Endothelial cell of umbilical vein (primary cell): ENCODE measurements at regions of chr7 and their contacts with region 1.

Region 1: GRCh38 chr7:5177060-5177459 is 13.0 kb upstream of the WIPI2 start:
- DNase-seq: peak; percentile 42
- H3K4me3 ChIP-seq: no peak overlapping the region
- H3K27ac ChIP-seq: no peak overlapping the region
- H3K4me1 ChIP-seq: no peaks in the 10 kb centered on the region
- H3K27me3 ChIP-seq: no peaks in the 10 kb centered on the region
- CTCF ChIP-seq: no peak
- POLR2A ChIP-seq: no peak

Region 2: GRCh38 chr7:4945949-4946348 is 231.1 kb before region 1 on chr7:
- CTCF ChIA-PET with region 1: no interaction called
- POLR2A ChIA-PET with region 1: no interaction called
- dilution Hi-C with region 1: no loop called
- intact Hi-C with region 1: no loop called
- DNase-seq: no peak
- H3K4me3 ChIP-seq: no peak overlapping the region
- H3K27ac ChIP-seq: no peak overlapping the region
- H3K4me1 ChIP-seq: no peaks in the 10 kb centered on the region
- H3K27me3 ChIP-seq: no peaks in the 10 kb centered on the region
- CTCF ChIP-seq: no peak
- POLR2A ChIP-seq: no peak

Region 3: GRCh38 chr7:5020097-5020496 is 157.0 kb before region 1 on chr7:
- CTCF ChIA-PET with region 1: no interaction called
- POLR2A ChIA-PET with region 1: no interaction called
- dilution Hi-C with region 1: no loop called
- intact Hi-C with region 1: no loop called
- DNase-seq: no peak
- H3K4me3 ChIP-seq: no peak overlapping the region
- H3K27ac ChIP-seq: no peak overlapping the region
- H3K4me1 ChIP-seq: no peaks in the 10 kb centered on the region
- H3K27me3 ChIP-seq: no peaks in the 10 kb centered on the region
- CTCF ChIP-seq: no peak
- POLR2A ChIP-seq: no peak

Region 4: DNA sequence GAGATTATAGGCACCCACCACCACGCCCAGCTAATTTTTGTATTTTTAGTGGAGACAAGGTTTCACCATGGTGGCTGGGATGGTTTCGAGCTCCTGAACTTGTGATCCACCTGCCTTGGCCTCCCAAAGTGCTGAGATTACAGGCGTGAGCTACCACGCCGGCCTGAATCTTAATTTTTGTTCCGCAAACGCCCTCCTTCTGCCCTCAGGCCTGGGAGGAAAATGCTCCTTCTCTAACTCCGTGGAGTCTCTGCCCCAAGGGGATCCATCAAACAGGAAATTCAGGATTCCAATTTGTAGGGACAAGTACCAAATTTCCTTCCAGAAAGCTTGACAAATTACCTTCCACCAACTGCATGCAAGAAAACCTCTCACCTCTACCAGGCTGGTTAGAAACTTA is 88.2 kb before region 1 on chr7:
- CTCF ChIA-PET with region 1: interaction called, 12 read pairs
- POLR2A ChIA-PET with region 1: interaction called, 4 read pairs
- dilution Hi-C with region 1: no loop called
- intact Hi-C with region 1: loop called (anchors 5 kb)
- DNase-seq: no peak
- H3K4me3 ChIP-seq: no peak overlapping the region
- H3K27ac ChIP-seq: no peak overlapping the region
- H3K4me1 ChIP-seq: no peaks in the 10 kb centered on the region
- H3K27me3 ChIP-seq: no peaks in the 10 kb centered on the region
- CTCF ChIP-seq: no peak
- POLR2A ChIP-seq: no peak

Region 5: DNA sequence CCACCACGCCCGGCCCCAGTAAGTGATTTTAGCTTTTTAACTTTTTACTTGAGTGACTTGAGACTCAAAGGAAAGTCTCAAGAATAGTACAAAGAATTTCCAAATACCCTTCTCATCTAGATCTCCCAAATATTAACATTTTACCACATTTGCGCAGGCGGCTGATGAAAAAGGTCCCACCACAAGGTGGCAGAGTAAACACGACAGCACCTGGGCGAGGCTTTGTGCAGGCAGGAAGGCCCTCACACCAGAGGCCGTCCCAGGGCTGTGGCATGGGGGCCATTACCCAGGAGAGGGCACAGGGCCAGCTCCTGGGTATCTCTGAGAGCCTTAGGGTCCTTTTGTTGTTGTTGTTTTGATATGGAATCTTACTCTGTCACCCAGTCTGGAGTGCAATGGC is 37.1 kb before region 1 on chr7:
- CTCF ChIA-PET with region 1: interaction called, 45 read pairs
- POLR2A ChIA-PET with region 1: no interaction called
- dilution Hi-C with region 1: no loop called
- intact Hi-C with region 1: loop called (anchors 1 kb)
- DNase-seq: peak; percentile 31
- H3K4me3 ChIP-seq: no peak overlapping the region
- H3K27ac ChIP-seq: no peak overlapping the region
- H3K4me1 ChIP-seq: no peaks in the 10 kb centered on the region
- H3K27me3 ChIP-seq: no peaks in the 10 kb centered on the region
- CTCF ChIP-seq: peak; percentile 31 to 47
- POLR2A ChIP-seq: no peak